Cardiac septum (tissue), 1 donor: ENCODE measurements at regions of chr20 and their contacts with region 1.

Region 1: DNA sequence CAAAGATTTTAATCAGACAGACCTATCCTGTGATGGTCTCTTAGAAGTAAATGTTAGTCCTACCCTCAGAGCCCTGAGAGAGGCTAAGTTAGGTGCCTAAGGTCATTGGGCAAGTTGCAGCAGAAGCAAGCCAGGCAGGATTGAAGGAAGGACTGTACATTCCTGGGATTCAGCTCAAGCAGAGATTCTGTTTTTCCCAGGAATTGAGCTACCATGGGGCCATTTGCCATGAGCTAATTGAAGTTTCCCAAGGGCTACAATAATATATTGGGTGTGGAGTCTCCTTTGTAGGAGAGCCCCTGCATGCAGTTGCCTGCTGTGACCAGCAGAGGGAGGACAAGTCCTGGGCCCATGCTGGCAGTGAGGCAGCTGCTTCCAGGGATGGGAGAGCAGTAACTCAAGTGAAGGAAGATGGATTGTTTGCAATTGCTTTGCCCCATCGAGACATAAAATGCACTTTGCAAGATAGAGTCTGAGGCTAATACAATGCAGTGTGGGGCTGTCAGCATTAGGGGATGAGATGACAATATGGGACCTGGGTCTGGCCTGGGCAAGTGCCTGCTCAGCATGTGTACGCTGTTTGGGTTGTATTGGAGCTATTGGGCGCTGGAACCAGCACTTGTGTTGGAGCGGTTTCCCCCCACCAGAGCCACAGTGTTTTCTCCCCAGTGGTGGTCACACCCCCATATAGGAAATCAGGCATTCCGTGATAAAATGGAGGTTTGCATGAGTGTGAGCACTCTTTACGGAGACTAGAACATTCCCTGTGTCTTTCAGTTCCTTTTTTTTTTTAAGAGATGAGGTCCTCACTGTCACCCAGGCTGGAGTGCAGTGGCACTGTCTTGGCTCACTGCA is 27.9 kb downstream of the DNMT3B start:
- DNase-seq: peak; percentile 84

Region 2: DNA sequence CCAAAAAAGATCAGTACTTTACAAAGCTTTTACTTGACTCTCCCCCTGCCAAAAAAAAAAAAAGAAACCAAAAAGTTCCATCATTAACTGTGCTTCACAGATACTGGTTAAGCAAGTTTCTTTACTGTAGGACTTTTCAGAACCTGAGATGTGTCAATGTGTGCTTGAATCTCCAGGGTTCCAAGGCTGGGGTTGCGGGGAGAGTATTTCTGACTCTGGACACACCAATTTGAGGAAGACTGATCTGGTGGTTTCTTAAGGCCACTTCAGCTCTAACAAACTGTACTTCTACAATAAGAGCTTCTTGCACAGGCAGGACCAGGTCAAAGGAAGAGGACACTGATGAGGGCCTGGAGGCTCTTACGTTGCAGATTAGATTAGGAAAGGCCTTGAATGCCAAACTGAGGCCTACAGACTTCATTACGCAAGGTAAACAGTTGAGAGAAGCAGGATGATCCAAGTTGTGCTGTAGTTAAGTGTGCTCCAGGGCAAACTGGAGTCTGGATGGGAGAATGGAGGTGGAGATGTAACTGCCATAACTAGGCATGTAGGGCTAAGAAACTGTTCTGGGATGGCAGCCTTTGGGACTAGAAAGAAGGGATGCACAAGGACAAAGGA is 71.3 kb before region 1 on chr20:
- intact Hi-C with region 1: no loop called
- DNase-seq: no peak

Region 3: GRCh38 chr20:32894026-32894483 is 103.9 kb after region 1 on chr20:
- intact Hi-C with region 1: loop called (anchors 5 kb)
- DNase-seq: no peak

Region 4: DNA sequence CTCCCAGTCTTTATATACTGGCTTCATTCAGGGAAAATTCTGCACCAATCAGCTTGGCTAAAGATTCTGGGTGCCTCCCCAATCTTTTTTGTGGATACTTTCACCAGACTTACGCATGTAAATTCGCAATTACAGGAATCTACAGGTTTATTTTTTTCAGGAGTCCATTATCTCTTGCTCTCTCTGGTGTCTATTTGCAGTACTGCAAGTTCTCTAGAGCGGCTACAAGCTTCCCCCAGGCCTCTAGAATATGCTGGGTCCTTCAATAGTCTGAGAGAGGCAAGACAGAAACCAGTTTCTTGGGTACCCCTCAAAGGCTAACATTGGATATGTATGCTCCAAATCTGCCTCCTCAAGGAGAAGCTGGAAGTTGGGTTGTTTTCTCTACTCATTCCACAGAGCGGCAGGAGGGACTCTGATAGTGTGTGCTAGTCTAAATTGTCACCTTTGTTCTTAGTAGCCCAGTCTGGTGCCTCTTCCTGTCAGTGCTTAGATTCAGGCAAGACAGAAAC is 155.6 kb after region 1 on chr20:
- intact Hi-C with region 1: loop called (anchors 5 kb)
- DNase-seq: no peak

Region 5: DNA sequence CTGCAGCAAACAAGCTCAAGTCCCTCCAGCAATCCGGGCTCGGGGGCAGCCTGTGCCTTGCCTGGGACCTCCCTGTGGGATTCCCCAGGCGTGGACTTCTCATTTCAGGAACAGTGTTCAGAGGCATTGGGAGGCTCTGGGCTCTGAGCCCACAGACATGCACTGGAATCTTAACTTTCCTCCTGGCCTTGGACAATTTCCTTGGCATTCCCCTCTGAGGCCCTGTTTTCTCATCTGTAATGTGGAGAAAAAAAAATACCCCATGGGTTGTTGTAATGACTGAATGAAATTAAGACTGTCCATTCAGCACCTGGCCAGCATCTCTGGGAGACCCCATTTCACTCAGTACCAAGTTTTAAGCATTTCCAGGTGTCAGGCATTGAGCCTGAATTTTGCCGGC is 306.9 kb after region 1 on chr20:
- intact Hi-C with region 1: loop called (anchors 10 kb)
- DNase-seq: no peak